Left cardiac atrium (tissue), 4 donors: ENCODE measurements at regions of chr1 and their contacts with region 1.

Region 1: GRCh38 chr1:92623187-92623778 is 136.6 kb upstream of the GFI1 start:
- DNase-seq: no peak
- ATAC-seq: no peak

Region 2: GRCh38 chr1:92310185-92310597 is 313.1 kb before region 1 on chr1:
- intact Hi-C with region 1: loop called (anchors 2 to 5 kb)
- DNase-seq: no peak
- ATAC-seq: no peak